GM10248 (cell line): ENCODE measurements at regions of chr14 and their contacts with region 1.

Region 1: GRCh38 chr14:46985529-46986380 is 334.2 kb upstream of the RPL10L start:
- DNase-seq: no peak
- CTCF ChIP-seq: no peak

Region 2: DNA sequence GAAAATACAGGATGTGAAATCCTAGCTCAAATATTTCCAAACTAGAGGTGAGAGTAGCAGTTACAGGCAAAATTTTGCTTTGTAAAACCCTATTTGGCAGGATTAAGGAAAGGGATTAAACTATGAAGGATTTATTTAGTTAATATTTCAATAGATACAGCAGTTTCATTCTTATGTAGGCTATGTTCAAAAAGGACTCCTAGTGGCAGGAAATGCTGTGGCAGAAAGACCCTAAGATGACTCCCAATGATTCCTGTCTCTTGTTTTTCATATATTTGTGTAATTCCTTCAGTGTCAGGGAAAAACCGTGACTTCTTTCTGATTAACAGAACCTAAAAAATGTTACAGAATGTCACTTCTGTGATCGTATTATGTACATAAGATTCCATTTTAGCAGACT is 34.7 kb before region 1 on chr14:
- CTCF ChIA-PET with region 1: no interaction called
- POLR2A ChIA-PET with region 1: no interaction called
- DNase-seq: no peak
- CTCF ChIP-seq: no peak

Region 3: GRCh38 chr14:46999661-47000060 is 13.9 kb after region 1 on chr14:
- CTCF ChIA-PET with region 1: interaction called, 12 read pairs
- POLR2A ChIA-PET with region 1: no interaction called
- DNase-seq: no peak
- CTCF ChIP-seq: no peak

Region 4: GRCh38 chr14:47022721-47023120 is 37.0 kb after region 1 on chr14:
- CTCF ChIA-PET with region 1: no interaction called
- POLR2A ChIA-PET with region 1: no interaction called
- DNase-seq: no peak
- CTCF ChIP-seq: no peak